GM12878 (cell line): ENCODE measurements at regions of chr12 and their contacts with region 1.

Region 1: DNA sequence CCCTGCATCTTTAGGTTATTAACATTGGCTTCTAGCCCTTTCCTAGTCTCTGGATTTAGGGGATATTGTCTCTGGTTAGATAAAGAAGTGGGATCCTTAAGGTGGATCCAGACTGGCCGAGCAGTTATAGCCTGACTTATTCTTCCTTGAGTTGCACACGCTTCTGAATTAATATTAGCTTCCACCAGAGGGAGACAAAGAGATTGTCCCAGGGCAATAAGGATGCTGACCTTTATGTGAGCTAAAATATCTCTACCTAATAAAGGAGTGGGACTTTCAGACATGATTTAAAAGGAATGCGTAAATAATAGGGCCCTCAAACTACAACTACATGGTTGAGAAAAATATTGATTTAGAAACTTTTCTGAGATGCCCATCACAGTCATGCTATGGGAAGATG is 139.7 kb downstream of the SLCO1B3 start:
- DNase-seq: peak; percentile 4
- ATAC-seq: peak; percentile 92
- H3K4me3 ChIP-seq: no peak overlapping the region
- H3K27ac ChIP-seq: no peak overlapping the region
- H3K4me1 ChIP-seq: no peaks in the 10 kb centered on the region
- H3K27me3 ChIP-seq: no peaks in the 10 kb centered on the region
- CTCF ChIP-seq: peak; percentile 53 to 61 (median 57)
- EP300 ChIP-seq: no peak
- POLR2A ChIP-seq: no peak
- RAD21 ChIP-seq: peak; percentile 55

Region 2: GRCh38 chr12:20646239-20646827 is 303.9 kb before region 1 on chr12:
- CTCF ChIA-PET with region 1: no interaction called
- POLR2A ChIA-PET with region 1: no interaction called
- RAD21 ChIA-PET with region 1: no interaction called
- SMC1A ChIA-PET with region 1: no interaction called
- in situ Hi-C with region 1: no loop called
- intact Hi-C with region 1: loop called (anchors 2 kb)
- DNase-seq: no peak
- ATAC-seq: peak; percentile 64
- H3K4me3 ChIP-seq: no peak overlapping the region
- H3K27ac ChIP-seq: no peak overlapping the region
- H3K4me1 ChIP-seq: no peaks in the 10 kb centered on the region
- H3K27me3 ChIP-seq: no peaks in the 10 kb centered on the region
- CTCF ChIP-seq: peak; percentile 30 to 54 (median 42); a peak in 4 of 6 replicates
- EP300 ChIP-seq: no peak
- POLR2A ChIP-seq: no peak
- RAD21 ChIP-seq: peak; percentile 56

Region 3: GRCh38 chr12:20931894-20932293 is 18.4 kb before region 1 on chr12:
- CTCF ChIA-PET with region 1: interaction called, 16 read pairs
- POLR2A ChIA-PET with region 1: interaction called, 3 read pairs
- RAD21 ChIA-PET with region 1: no interaction called
- SMC1A ChIA-PET with region 1: no interaction called
- in situ Hi-C with region 1: no loop called
- intact Hi-C with region 1: no loop called
- DNase-seq: no peak
- ATAC-seq: no peak
- H3K4me3 ChIP-seq: no peak overlapping the region
- H3K27ac ChIP-seq: no peak overlapping the region
- H3K4me1 ChIP-seq: no peaks in the 10 kb centered on the region
- H3K27me3 ChIP-seq: no peaks in the 10 kb centered on the region
- CTCF ChIP-seq: no peak
- EP300 ChIP-seq: no peak
- POLR2A ChIP-seq: no peak
- RAD21 ChIP-seq: no peak

Region 4: DNA sequence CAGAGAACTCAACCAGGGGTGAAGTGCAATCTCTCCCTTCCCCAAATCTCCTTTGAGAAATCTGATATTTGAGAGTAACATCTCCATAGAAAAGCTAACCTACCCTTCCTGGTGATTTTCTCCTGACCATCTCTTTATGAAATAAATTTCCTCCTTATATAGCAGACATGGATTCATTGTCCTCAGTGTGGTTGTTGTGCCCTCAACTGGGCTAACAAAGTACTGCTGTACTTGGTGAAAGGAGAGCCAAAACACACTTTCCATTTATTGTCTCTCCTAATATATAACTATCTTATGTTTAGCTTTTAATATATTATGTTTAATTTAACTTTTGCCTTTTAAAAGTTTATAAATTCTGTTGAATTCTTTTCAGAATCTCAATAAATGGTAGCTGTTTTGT is 115.6 kb after region 1 on chr12:
- CTCF ChIA-PET with region 1: interaction called, 9 read pairs
- POLR2A ChIA-PET with region 1: no interaction called
- RAD21 ChIA-PET with region 1: interaction called, 6 read pairs
- SMC1A ChIA-PET with region 1: interaction called, 10 read pairs
- in situ Hi-C with region 1: no loop called
- intact Hi-C with region 1: loop called (anchors 1 kb)
- DNase-seq: no peak
- ATAC-seq: 0 out of 3 replicates have a peak, but pooled peaks have one; percentile 39
- H3K4me3 ChIP-seq: no peak overlapping the region
- H3K27ac ChIP-seq: no peak overlapping the region
- H3K4me1 ChIP-seq: no peaks in the 10 kb centered on the region
- H3K27me3 ChIP-seq: no peaks in the 10 kb centered on the region
- CTCF ChIP-seq: peak in 1 of 3 experiments; percentile 44; a peak in 3 of 6 replicates
- EP300 ChIP-seq: no peak
- POLR2A ChIP-seq: no peak
- RAD21 ChIP-seq: peak; percentile 47; the same call in 1 of the 2 replicates

Region 5: DNA sequence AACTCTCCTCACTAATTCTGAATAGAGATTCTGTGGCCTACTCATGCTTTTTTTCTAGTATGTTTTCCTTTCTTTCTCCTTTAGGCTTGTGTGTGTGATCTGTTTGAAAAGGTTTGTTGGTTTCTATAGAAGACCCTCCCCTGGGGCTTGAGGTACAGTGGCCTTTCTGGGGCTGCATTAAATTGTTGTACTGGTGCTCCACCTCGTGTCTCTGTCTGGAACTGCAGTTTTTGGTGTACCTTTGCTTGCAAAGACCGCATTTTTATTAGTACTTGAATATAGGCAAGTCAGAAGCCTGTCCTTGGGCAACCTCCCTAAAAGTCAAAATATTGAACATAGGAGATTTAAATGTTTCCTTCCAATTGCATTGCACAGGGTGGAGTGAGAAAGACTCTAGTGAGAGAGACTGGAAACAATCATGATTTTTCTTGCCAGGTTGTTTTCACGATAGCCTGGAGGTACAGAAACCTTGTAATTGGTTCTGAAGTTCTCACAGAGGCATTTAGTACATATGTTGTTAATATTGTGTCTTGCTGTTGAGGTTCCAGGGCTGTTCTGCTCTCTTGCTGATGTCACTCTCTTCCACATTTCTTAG is 219.7 kb after region 1 on chr12:
- CTCF ChIA-PET with region 1: interaction called, 26 read pairs
- POLR2A ChIA-PET with region 1: no interaction called
- RAD21 ChIA-PET with region 1: no interaction called
- SMC1A ChIA-PET with region 1: interaction called, 3 read pairs
- in situ Hi-C with region 1: loop called (anchors 5 kb)
- intact Hi-C with region 1: loop called (anchors 1 kb)
- DNase-seq: no peak
- ATAC-seq: peak; percentile 68
- H3K4me3 ChIP-seq: no peak overlapping the region
- H3K27ac ChIP-seq: no peak overlapping the region
- H3K4me1 ChIP-seq: no peaks in the 10 kb centered on the region
- H3K27me3 ChIP-seq: no peaks in the 10 kb centered on the region
- CTCF ChIP-seq: peak; percentile 71 to 77 (median 71)
- EP300 ChIP-seq: no peak
- POLR2A ChIP-seq: no peak
- RAD21 ChIP-seq: peak; percentile 78

Region 6: GRCh38 chr12:21683115-21683514 is 732.9 kb after region 1 on chr12:
- CTCF ChIA-PET with region 1: no interaction called
- POLR2A ChIA-PET with region 1: no interaction called
- RAD21 ChIA-PET with region 1: no interaction called
- SMC1A ChIA-PET with region 1: no interaction called
- in situ Hi-C with region 1: no loop called
- intact Hi-C with region 1: loop called (anchors 10 kb)
- DNase-seq: no peak
- ATAC-seq: no peak
- H3K4me3 ChIP-seq: no peak overlapping the region
- H3K27ac ChIP-seq: no peak overlapping the region
- H3K4me1 ChIP-seq: no peaks in the 10 kb centered on the region
- H3K27me3 ChIP-seq: no peaks in the 10 kb centered on the region
- CTCF ChIP-seq: no peak
- EP300 ChIP-seq: no peak
- POLR2A ChIP-seq: no peak
- RAD21 ChIP-seq: no peak